ENCODE measurements at regions of chr4 and their contacts with region 1.

Region 1: GRCh38 chr4:177108708-177109107 is 201.0 kb upstream of the NEIL3 start:
- ATAC-seq: peak in 3 of 8 experiments; percentile 84 to 94 (median 87)
- H3K4me3 ChIP-seq: no peak overlapping the region
- H3K27ac ChIP-seq: no peak overlapping the region
- H3K4me1 ChIP-seq: peaks cover 0 to 3% of the 10 kb centered on the region in 2 donors

Region 2: DNA sequence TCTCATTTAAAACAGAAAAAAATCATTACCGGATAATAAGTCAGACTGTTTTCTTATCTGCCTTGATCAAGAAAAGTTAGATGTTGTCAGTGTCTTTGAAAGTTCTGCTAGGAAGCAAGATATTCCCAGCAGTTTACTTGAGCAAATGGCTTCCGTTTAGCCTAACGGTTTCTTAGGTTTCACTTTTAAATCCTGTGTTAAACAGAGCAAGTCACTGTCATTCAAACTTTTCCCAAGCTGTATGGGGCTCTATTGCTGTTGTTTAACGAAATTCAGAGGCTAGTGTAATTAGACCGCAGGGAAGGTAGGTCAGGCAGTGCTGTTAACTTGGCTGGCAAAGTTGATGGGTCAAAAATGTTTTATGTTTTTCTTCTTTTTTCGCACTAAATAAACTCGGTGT is 120.6 kb after region 1 on chr4:
- in situ Hi-C with region 1: loop called in 1 of 9 experiments (anchors 25 kb)
- ATAC-seq: peak in 1 of 8 experiments; percentile 53
- H3K4me3 ChIP-seq: no peak overlapping the region
- H3K27ac ChIP-seq: no peak overlapping the region
- H3K4me1 ChIP-seq: peaks cover 0 to 8% of the 10 kb centered on the region in 2 donors

Region 3: GRCh38 chr4:177256950-177257349 is 148.2 kb after region 1 on chr4:
- in situ Hi-C with region 1: no loop called
- ATAC-seq: no peak
- H3K4me3 ChIP-seq: no peak overlapping the region
- H3K27ac ChIP-seq: no peak overlapping the region
- H3K4me1 ChIP-seq: no peaks in the 10 kb centered on the region

Region 4: DNA sequence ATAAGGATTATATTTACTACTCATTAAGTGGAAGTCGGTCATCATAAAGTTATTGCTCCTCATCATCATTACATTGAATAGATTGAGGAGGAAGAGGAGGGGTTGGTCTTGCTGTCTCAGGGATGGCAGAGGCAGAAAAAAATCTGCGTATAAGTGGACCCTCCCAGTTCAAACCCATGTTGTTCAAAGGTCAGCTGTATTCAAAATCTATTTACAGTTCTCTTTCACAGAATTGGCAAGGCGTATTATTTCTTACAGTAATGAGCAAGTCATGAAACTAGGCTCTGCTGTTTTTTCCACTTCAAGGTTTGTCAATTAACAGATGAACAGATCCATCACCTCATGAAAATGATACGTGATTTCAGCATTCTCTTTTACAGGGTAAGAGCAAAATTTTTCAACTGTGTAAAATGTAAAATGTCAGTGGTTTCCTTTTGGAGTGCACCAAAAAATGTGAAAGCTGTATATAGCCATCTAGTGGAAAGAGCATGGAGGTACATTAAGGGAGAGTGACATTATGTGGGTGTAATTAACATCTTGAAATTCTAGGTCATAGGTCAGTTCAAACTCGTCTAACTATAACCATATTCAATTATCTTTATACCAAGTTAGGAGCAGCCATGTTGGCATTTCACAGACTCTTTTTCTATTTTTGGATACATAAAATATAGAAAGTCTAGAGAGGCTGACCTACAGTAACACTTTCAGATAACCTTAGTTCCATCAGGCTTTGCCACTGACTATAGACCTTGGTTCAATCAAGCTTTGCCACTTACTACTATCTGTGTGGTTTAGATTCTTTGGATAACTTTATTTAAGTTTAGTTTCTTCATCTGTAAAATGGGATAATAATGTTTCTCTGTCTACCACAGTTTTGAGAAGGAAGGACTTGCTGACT is 231.0 kb after region 1 on chr4:
- in situ Hi-C with region 1: loop called in 3 of 9 experiments (anchors 25 kb)
- ATAC-seq: peak in 4 of 8 experiments; percentile 27 to 93 (median 88)
- H3K4me3 ChIP-seq: no peak overlapping the region
- H3K27ac ChIP-seq: no peak overlapping the region
- H3K4me1 ChIP-seq: no peaks in the 10 kb centered on the region

Region 5: DNA sequence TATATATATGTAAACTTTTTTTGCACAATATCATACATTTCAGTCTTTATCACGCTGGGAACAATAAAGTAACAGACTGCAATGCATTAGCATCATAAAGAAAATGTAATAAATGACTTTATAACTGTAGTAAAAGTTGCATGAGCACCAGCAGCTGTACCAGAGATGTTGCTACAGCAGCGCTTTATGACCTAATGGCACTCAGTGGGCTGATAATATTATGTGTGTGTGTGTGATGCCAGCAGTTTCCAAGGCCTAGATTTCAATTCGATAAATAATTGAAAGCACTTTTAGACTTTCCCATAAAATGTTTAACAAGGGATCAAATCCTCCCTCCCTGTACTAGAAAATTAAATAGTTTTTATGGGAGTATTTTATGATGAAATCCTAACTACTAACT is 701.1 kb after region 1 on chr4:
- in situ Hi-C with region 1: no loop called
- ATAC-seq: peak in 1 of 8 experiments; percentile 73
- H3K4me3 ChIP-seq: no peak overlapping the region
- H3K27ac ChIP-seq: no peak overlapping the region
- H3K4me1 ChIP-seq: peaks cover 5 to 6% of the 10 kb centered on the region in 2 donors

Measured in motor neuron (in vitro differentiated cells).